CD4-positive, alpha-beta memory T cell (primary cell): ENCODE measurements at regions of chr1 and their contacts with region 1.

Region 1: DNA sequence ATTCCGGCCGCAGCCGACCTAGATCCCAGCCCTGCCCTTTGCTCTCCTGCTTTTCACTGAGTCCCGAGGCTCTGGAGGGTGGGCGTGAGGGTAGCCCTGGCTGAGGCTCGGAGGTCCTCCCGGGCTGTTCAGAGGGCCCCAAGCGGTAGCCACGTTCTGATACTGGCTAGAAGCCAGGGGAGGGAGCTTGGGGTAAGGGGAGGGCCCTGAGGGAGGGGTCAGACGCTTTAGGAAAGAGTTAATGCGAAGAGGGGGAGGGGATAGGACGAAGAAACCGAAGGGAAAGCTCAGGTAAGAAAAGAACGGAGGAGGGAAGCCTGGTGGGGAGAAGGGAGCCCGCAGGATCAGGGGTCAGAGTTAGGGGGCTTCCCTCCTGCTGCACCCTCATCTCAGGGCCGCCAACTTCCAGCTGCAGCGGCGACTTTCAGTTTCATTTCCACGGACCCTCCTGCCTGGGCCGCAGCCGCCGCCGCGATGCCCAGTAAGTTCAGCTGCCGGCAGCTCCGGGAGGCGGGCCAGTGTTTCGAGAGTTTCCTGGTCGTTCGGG is at the start of gene MOV10:
- DNase-seq: peak; percentile 59 to 74 (median 64)
- H3K4me3 ChIP-seq: peak within 1 kb of the TSS; percentile 71 to 82
- H3K4me3 Mint-ChIP-seq: peak within 1 kb of the TSS; percentile 96 to 98 (median 97)
- H3K27ac ChIP-seq: peak within 1 kb of the TSS; percentile 86
- H3K27ac Mint-ChIP-seq: peak within 1 kb of the TSS; percentile 93 to 98 (median 97)
- H3K4me1 ChIP-seq: peaks cover 53% of the 10 kb centered on the region
- H3K4me1 Mint-ChIP-seq: peaks cover 40 to 65% (median 52%) of the 10 kb centered on the region in 4 donors
- H3K27me3 ChIP-seq: no peaks in the 10 kb centered on the region
- H3K27me3 Mint-ChIP-seq: no peaks in the 10 kb centered on the region
- total RNA-seq, gene MOV10: 90.6 to 96.1 TPM

Region 2: DNA sequence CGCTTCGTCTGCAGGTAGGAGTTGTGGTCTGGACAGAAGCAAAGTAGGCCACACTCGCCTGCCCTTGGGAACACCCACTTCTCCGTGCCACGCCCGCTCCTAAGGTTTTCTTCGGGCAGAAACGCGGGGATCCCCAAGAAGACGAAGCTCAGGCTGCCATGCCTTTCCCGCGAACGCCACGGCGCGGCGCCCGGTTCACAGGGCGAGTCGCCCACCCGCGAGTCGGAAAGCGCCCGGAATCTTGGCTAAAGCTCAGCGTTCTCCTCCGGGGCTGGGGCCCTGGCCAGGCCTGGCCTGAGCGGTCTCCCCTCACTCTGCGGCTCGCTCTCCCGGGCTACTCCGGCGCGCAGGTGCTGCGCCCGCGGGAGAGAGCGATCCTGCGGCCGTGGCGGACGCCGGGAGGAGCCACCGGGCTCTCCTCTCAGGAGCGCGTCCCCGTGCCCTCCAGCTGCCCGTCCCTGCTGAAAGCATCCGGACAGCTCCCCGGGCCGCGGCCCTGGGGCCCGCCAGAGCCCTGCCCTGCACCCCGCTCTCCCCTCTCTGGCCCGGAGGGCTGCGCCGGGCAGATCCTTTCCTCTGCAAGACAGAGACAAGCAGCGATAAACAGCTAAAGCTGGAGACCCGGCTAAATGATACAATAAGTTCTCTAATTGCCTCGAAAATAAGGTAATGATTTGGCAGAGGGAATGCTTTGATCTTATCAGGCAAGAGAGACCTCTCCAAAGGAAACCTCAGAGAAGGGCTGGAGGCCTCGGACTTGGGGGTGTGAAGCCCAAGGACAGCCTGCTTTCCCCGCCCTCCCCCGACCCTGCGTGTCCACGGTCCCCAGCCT is 172.5 kb before region 1 on chr1:
- CTCF ChIA-PET with region 1: interaction called, 26 read pairs
- POLR2A ChIA-PET with region 1: interaction called, 7 read pairs
- intact Hi-C with region 1: no loop called
- DNase-seq: peak in 4 of 5 donors; percentile 30 to 51 (median 38)
- H3K4me3 ChIP-seq: peak overlapping the region; percentile 24 to 36
- H3K4me3 Mint-ChIP-seq: peak overlapping the region; percentile 62 to 84 (median 75)
- H3K27ac ChIP-seq: no peak overlapping the region
- H3K27ac Mint-ChIP-seq: no peak overlapping the region
- H3K4me1 ChIP-seq: peaks cover 5% of the 10 kb centered on the region
- H3K4me1 Mint-ChIP-seq: peaks cover 2 to 13% (median 5%) of the 10 kb centered on the region in 4 donors
- H3K27me3 ChIP-seq: peaks cover 39% of the 10 kb centered on the region
- H3K27me3 Mint-ChIP-seq: peaks cover 43 to 51% of the 10 kb centered on the region in 2 donors

Region 3: DNA sequence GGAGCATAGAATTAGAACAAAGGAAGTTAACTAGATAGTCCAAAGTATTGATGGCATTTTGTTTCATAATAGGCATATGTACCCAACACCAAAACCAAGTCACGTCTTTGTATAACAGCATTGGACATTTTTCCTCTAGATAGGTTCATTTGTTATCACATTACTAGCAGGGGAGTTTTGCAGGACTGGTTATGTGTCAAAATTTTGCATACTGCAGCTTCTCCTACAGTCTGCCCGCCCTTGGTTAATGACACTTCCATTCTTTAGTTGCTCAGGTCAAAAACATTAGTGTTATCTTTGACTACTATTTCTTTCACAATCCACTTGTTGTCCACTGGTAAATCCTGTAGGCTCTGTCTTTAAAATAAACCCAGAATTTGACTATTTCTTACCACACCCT is 46.0 kb before region 1 on chr1:
- CTCF ChIA-PET with region 1: no interaction called
- POLR2A ChIA-PET with region 1: interaction called, 11 read pairs
- intact Hi-C with region 1: no loop called
- DNase-seq: no peak
- H3K4me3 ChIP-seq: no peak overlapping the region
- H3K4me3 Mint-ChIP-seq: peak overlapping the region in 4 of 8 donors; percentile 22 to 76 (median 50)
- H3K27ac ChIP-seq: no peak overlapping the region
- H3K27ac Mint-ChIP-seq: peak overlapping the region in 6 of 7 donors; percentile 5 to 73 (median 60)
- H3K4me1 ChIP-seq: peaks cover 92% of the 10 kb centered on the region
- H3K4me1 Mint-ChIP-seq: peaks cover 69 to 92% (median 82%) of the 10 kb centered on the region in 4 donors
- H3K27me3 ChIP-seq: no peaks in the 10 kb centered on the region
- H3K27me3 Mint-ChIP-seq: no peaks in the 10 kb centered on the region

Region 4: GRCh38 chr1:112660072-112660471 is 14.4 kb before region 1 on chr1:
- CTCF ChIA-PET with region 1: interaction called, 12 read pairs
- POLR2A ChIA-PET with region 1: interaction called, 17 read pairs
- intact Hi-C with region 1: no loop called
- DNase-seq: no peak
- H3K4me3 ChIP-seq: no peak overlapping the region
- H3K4me3 Mint-ChIP-seq: no peak overlapping the region
- H3K27ac ChIP-seq: no peak overlapping the region
- H3K27ac Mint-ChIP-seq: no peak overlapping the region
- H3K4me1 ChIP-seq: no peaks in the 10 kb centered on the region
- H3K4me1 Mint-ChIP-seq: peaks cover 6 to 19% (median 9%) of the 10 kb centered on the region in 4 donors
- H3K27me3 ChIP-seq: no peaks in the 10 kb centered on the region
- H3K27me3 Mint-ChIP-seq: no peaks in the 10 kb centered on the region

Region 5: GRCh38 chr1:112700290-112701226 is 26.0 kb after region 1 on chr1:
- CTCF ChIA-PET with region 1: interaction called, 7 read pairs
- POLR2A ChIA-PET with region 1: interaction called, 23 read pairs
- intact Hi-C with region 1: loop called (anchors 1 kb)
- DNase-seq: peak; percentile 44 to 80 (median 45)
- H3K4me3 ChIP-seq: no peak overlapping the region
- H3K4me3 Mint-ChIP-seq: peak overlapping the region in 3 of 8 donors; percentile 29 to 39 (median 34)
- H3K27ac ChIP-seq: peak overlapping the region; percentile 40
- H3K27ac Mint-ChIP-seq: peak overlapping the region; percentile 82 to 94 (median 84)
- H3K4me1 ChIP-seq: peaks cover 49% of the 10 kb centered on the region
- H3K4me1 Mint-ChIP-seq: peaks cover 29 to 65% (median 47%) of the 10 kb centered on the region in 4 donors
- H3K27me3 ChIP-seq: no peaks in the 10 kb centered on the region
- H3K27me3 Mint-ChIP-seq: no peaks in the 10 kb centered on the region

Region 6: GRCh38 chr1:112706908-112707663 is 32.6 kb after region 1 on chr1 and contains the start of gene RHOC:
- CTCF ChIA-PET with region 1: interaction called, 7 read pairs
- POLR2A ChIA-PET with region 1: interaction called, 23 read pairs
- intact Hi-C with region 1: loop called (anchors 2 kb)
- DNase-seq: peak; percentile 41 to 59 (median 49)
- H3K4me3 ChIP-seq: peak within 1 kb of the TSS in 1 of 2 donors; percentile 45
- H3K4me3 Mint-ChIP-seq: peak within 1 kb of the TSS; percentile 85 to 94 (median 88)
- H3K27ac ChIP-seq: peak within 1 kb of the TSS; percentile 49
- H3K27ac Mint-ChIP-seq: peak within 1 kb of the TSS; percentile 73 to 93 (median 85)
- H3K4me1 ChIP-seq: peaks cover 33% of the 10 kb centered on the region
- H3K4me1 Mint-ChIP-seq: peaks cover 23 to 53% (median 35%) of the 10 kb centered on the region in 4 donors
- H3K27me3 ChIP-seq: no peaks in the 10 kb centered on the region
- H3K27me3 Mint-ChIP-seq: peaks cover 0 to 2% of the 10 kb centered on the region in 2 donors
- total RNA-seq, gene RHOC: 6.1 to 6.7 TPM